Naive thymus-derived CD4-positive, alpha-beta T cell (primary cell): ENCODE measurements at regions of chr2 and their contacts with region 1.

Region 1: GRCh38 chr2:20326163-20326780 is 24.4 kb downstream of the PUM2 start:
- DNase-seq: peak in 8 of 9 donors; percentile 22 to 55 (median 39)
- ATAC-seq: peak; percentile 93
- H3K4me3 ChIP-seq: no peak overlapping the region
- H3K4me3 Mint-ChIP-seq: peak overlapping the region in 6 of 10 donors; percentile 1 to 44 (median 14)
- H3K27ac ChIP-seq: no peak overlapping the region
- H3K27ac Mint-ChIP-seq: peak overlapping the region in 6 of 9 donors; percentile 0 to 85 (median 42)
- H3K4me1 ChIP-seq: peaks cover 6 to 8% of the 10 kb centered on the region in 2 donors
- H3K4me1 Mint-ChIP-seq: peaks cover 59 to 92% (median 85%) of the 10 kb centered on the region in 7 donors
- H3K27me3 ChIP-seq: no peaks in the 10 kb centered on the region
- H3K27me3 Mint-ChIP-seq: no peaks in the 10 kb centered on the region

Region 2: DNA sequence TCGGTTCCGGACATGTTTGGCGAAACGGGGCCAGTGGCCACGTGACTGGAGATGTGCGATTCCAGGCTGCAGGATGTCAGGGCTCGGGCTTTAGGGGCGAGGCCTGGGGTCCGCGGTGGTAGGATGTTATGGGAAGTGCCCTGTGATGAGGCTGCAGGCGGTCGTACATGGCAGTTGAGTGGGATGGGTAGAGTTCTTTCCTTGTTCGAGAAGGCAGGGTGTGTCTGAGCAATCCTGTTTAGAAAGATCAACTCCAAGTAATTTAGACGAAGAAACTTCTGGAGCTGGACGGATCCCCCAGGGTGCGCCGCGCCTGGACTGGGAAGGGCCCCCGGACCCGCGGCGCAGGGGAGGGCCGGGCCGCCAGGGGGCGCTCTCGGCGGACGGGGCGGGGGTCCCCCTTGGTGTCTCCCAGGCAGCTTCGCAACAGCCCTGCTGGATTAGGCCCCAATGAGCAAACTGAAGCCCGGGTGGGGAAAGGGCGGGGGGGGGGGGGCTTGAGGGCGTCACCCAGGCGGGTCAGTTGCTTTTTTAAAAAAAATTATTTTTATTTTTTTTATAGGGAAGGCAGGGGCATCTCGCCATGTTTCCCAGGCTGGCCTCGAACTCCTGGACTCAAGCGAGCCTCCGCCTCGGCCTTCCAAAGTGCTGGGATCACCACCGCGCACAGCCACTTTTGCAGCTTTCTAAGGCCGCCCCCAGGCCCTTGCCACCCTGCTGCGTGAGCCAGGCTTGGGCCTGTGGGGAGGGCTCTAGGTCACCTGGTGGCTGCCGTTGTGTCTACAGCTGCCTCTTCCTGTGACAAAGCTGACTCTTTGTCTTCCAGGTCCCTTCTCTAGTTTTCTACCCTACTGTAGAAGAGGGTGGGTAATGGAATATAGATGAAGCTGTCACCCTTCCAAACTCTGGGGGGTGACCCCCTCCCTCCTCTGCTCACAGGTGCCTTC is 83.9 kb before region 1 on chr2:
- CTCF ChIA-PET with region 1: no interaction called
- POLR2A ChIA-PET with region 1: interaction called, 5 read pairs
- intact Hi-C with region 1: loop called in 1 of 2 experiments (anchors 5 kb)
- DNase-seq: peak in 1 of 9 donors; percentile 63
- ATAC-seq: peak; percentile 38
- H3K4me3 ChIP-seq: peak overlapping the region; percentile 28
- H3K4me3 Mint-ChIP-seq: peak overlapping the region; percentile 41 to 83 (median 63)
- H3K27ac ChIP-seq: no peak overlapping the region
- H3K27ac Mint-ChIP-seq: peak overlapping the region in 7 of 9 donors; percentile 34 to 78 (median 58)
- H3K4me1 ChIP-seq: no peaks in the 10 kb centered on the region
- H3K4me1 Mint-ChIP-seq: peaks cover 3 to 17% (median 9%) of the 10 kb centered on the region in 7 donors
- H3K27me3 ChIP-seq: no peaks in the 10 kb centered on the region
- H3K27me3 Mint-ChIP-seq: peaks cover 0 to 15% (median 6%) of the 10 kb centered on the region in 5 donors

Region 3: DNA sequence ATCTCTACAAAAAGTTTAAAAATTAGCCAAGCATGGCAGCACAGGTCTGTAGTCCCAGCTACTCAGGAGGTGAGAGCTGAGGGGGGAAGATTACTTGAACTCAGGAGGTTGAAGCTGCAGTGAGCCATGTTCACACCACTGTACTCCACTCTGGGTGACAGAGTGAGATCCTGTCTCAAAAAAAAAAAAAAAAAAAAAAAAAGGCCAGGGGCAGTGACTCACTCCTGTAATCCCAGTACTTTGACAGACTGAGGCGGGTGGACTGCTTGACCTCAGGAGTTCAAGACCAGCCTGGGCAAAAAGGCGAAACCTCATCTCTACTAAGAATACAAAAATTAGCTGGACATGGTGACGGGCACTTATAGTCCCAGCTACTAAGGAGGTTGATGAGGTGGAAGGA is 12.6 kb before region 1 on chr2:
- CTCF ChIA-PET with region 1: no interaction called
- POLR2A ChIA-PET with region 1: interaction called, 4 read pairs
- intact Hi-C with region 1: loop called in 1 of 2 experiments (anchors 1 kb)
- DNase-seq: no peak
- ATAC-seq: no peak
- H3K4me3 ChIP-seq: no peak overlapping the region
- H3K4me3 Mint-ChIP-seq: no peak overlapping the region
- H3K27ac ChIP-seq: no peak overlapping the region
- H3K27ac Mint-ChIP-seq: peak overlapping the region in 2 of 9 donors; percentile 10 to 25
- H3K4me1 ChIP-seq: peaks cover 10 to 14% of the 10 kb centered on the region in 2 donors
- H3K4me1 Mint-ChIP-seq: peaks cover 7 to 54% (median 43%) of the 10 kb centered on the region in 7 donors
- H3K27me3 ChIP-seq: no peaks in the 10 kb centered on the region
- H3K27me3 Mint-ChIP-seq: no peaks in the 10 kb centered on the region

Region 4: GRCh38 chr2:20381444-20381843 is 55.2 kb after region 1 on chr2:
- CTCF ChIA-PET with region 1: no interaction called
- POLR2A ChIA-PET with region 1: no interaction called
- intact Hi-C with region 1: loop called in 1 of 2 experiments (anchors 1 kb)
- DNase-seq: no peak
- ATAC-seq: no peak
- H3K4me3 ChIP-seq: no peak overlapping the region
- H3K4me3 Mint-ChIP-seq: no peak overlapping the region
- H3K27ac ChIP-seq: no peak overlapping the region
- H3K27ac Mint-ChIP-seq: no peak overlapping the region
- H3K4me1 ChIP-seq: no peaks in the 10 kb centered on the region
- H3K4me1 Mint-ChIP-seq: peaks cover 0 to 15% (median 0%) of the 10 kb centered on the region in 7 donors
- H3K27me3 ChIP-seq: no peaks in the 10 kb centered on the region
- H3K27me3 Mint-ChIP-seq: peaks cover 0 to 19% (median 0%) of the 10 kb centered on the region in 5 donors

Region 5: DNA sequence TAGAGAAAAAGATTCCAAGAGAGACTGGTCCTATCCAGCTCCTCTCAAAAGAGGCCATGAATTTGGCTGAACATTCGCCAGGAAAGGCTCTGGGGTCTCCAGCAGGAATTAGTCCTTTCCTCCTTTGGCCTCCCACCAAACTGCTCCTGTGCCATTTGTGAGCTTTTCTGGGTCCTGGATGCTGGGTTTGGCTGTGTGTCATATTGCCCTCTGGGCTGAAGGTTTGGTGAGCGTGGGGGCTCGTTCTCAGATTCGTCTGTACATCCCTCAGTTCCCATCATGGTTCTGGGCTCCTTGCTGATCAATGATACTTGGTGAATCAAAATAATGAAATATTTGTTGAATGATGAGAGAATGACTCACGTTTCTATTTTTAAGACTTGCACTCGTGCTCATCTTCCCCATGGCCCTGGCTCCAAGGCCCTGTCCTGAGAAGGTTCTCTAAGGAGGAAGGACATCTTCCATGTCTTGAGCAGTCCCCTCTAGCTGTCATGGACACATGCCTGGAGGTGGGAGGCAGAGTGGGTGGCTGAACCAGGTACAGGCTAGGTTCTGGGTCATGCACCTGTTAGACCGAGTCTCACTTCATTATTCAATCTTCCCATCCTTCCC is 72.8 kb after region 1 on chr2:
- CTCF ChIA-PET with region 1: no interaction called
- POLR2A ChIA-PET with region 1: no interaction called
- intact Hi-C with region 1: no loop called
- DNase-seq: no peak
- ATAC-seq: no peak
- H3K4me3 ChIP-seq: no peak overlapping the region
- H3K4me3 Mint-ChIP-seq: no peak overlapping the region
- H3K27ac ChIP-seq: no peak overlapping the region
- H3K27ac Mint-ChIP-seq: no peak overlapping the region
- H3K4me1 ChIP-seq: no peaks in the 10 kb centered on the region
- H3K4me1 Mint-ChIP-seq: peaks cover 0 to 2% (median 0%) of the 10 kb centered on the region in 7 donors
- H3K27me3 ChIP-seq: no peaks in the 10 kb centered on the region
- H3K27me3 Mint-ChIP-seq: peaks cover 0 to 46% (median 7%) of the 10 kb centered on the region in 5 donors

Region 6: DNA sequence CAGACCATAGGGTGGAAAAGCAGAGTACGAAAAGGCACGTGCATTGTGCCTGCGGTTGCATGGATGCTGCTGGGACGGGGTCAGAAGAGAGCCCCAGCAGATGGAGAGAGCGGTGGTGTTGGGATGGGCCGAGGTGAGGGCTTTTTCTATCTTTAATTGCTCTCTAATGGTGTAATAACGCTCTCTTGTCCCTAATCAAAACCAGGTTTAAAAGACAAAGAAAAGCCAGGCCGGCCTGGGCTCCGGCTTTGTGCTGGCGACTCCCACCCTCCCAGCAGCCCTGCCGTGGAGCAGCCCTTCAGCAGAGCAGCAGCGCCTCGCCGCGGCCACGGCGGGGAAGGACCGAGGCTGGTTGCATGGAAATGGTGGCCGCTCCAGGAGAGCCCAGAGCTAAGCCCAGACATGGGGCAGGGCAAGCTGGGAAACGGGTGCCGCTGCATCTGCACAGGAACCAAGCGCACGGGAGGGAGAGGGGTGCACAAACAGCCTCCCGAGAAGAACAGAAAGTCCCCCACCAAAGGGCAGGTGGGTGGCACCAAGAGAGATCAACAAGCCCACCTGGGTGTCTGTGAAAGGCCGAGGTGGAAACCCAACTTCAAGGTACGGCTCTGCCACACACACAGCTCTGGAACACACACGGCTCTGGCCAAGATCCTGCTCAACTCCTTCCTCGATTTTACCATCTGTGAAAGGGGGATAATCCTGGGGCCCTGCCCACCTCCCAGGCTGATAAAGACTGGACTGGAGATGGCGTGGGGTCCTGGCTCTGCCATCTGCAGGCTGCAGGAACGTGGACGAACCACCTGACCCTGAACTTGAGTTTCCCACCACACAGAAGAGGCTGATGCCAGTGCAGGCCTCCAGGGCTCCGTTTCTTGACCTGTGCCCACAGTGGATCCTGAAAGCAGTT is 309.7 kb after region 1 on chr2:
- CTCF ChIA-PET with region 1: no interaction called
- POLR2A ChIA-PET with region 1: no interaction called
- intact Hi-C with region 1: no loop called
- DNase-seq: peak in 7 of 9 donors; percentile 11 to 58 (median 18)
- ATAC-seq: peak; percentile 82
- H3K4me3 ChIP-seq: no peak overlapping the region
- H3K4me3 Mint-ChIP-seq: no peak overlapping the region
- H3K27ac ChIP-seq: no peak overlapping the region
- H3K27ac Mint-ChIP-seq: peak overlapping the region in 2 of 9 donors; percentile 4 to 10
- H3K4me1 ChIP-seq: no peaks in the 10 kb centered on the region
- H3K4me1 Mint-ChIP-seq: peaks cover 0 to 12% (median 0%) of the 10 kb centered on the region in 7 donors
- H3K27me3 ChIP-seq: no peaks in the 10 kb centered on the region
- H3K27me3 Mint-ChIP-seq: no peaks in the 10 kb centered on the region